ENCODE measurements at regions of chr13 and their contacts with region 1.

Region 1: GRCh38 chr13:42991892-42992763 is at the start of gene EPSTI1:
- DNase-seq: peak in 1 of 2 experiments; percentile 24
- H3K4me3 ChIP-seq: peak within 1 kb of the TSS; percentile 36; the same call in 1 of the 2 replicates
- H3K27ac ChIP-seq: no peak within 1 kb of the TSS
- H3K4me1 ChIP-seq: peaks cover 11% of the 10 kb centered on the region
- H3K27me3 ChIP-seq: no peaks in the 10 kb centered on the region
- CTCF ChIP-seq: no peak
- total RNA-seq, gene EPSTI1: 2.7 and 3.4 TPM in 2 replicates

Region 2: GRCh38 chr13:43180837-43181236 is 188.7 kb after region 1 on chr13:
- CTCF ChIA-PET with region 1: interaction called, 12 read pairs
- POLR2A ChIA-PET with region 1: no interaction called
- intact Hi-C with region 1: no loop called
- DNase-seq: no peak
- H3K4me3 ChIP-seq: no peak overlapping the region
- H3K27ac ChIP-seq: no peak overlapping the region
- H3K4me1 ChIP-seq: no peaks in the 10 kb centered on the region
- H3K27me3 ChIP-seq: no peaks in the 10 kb centered on the region
- CTCF ChIP-seq: no peak

Measured in PC-9 (cell line).